ENCODE measurements at regions of chr1 and their contacts with region 1.

Region 1: GRCh38 chr1:110106013-110106941 is 6.0 kb upstream of the UBL4B start:
- DNase-seq: peak; percentile 23
- ATAC-seq: peak; percentile 97
- H3K4me3 ChIP-seq: no peak overlapping the region
- H3K27ac ChIP-seq: no peak overlapping the region
- H3K4me1 ChIP-seq: peaks cover 15% of the 10 kb centered on the region
- H3K27me3 ChIP-seq: no peaks in the 10 kb centered on the region
- CTCF ChIP-seq: peak; percentile 93 to 95 (median 93); a peak in 5 of 6 replicates
- EP300 ChIP-seq: no peak
- POLR2A ChIP-seq: no peak
- RAD21 ChIP-seq: peak; percentile 85

Region 2: GRCh38 chr1:110053557-110054428 is 52.5 kb before region 1 on chr1:
- CTCF ChIA-PET with region 1: interaction called, 36 read pairs
- POLR2A ChIA-PET with region 1: no interaction called
- RAD21 ChIA-PET with region 1: interaction called, 9 read pairs
- SMC1A ChIA-PET with region 1: interaction called, 7 read pairs
- in situ Hi-C with region 1: loop called (anchors 5 kb)
- intact Hi-C with region 1: loop called (anchors 1 kb)
- DNase-seq: no peak
- ATAC-seq: peak; percentile 95
- H3K4me3 ChIP-seq: no peak overlapping the region
- H3K27ac ChIP-seq: no peak overlapping the region
- H3K4me1 ChIP-seq: no peaks in the 10 kb centered on the region
- H3K27me3 ChIP-seq: no peaks in the 10 kb centered on the region
- CTCF ChIP-seq: peak; percentile 95 to 97 (median 96); a peak in 5 of 6 replicates
- EP300 ChIP-seq: no peak
- POLR2A ChIP-seq: peak; percentile 37; the same call in 1 of the 2 replicates
- RAD21 ChIP-seq: peak; percentile 77

Region 3: DNA sequence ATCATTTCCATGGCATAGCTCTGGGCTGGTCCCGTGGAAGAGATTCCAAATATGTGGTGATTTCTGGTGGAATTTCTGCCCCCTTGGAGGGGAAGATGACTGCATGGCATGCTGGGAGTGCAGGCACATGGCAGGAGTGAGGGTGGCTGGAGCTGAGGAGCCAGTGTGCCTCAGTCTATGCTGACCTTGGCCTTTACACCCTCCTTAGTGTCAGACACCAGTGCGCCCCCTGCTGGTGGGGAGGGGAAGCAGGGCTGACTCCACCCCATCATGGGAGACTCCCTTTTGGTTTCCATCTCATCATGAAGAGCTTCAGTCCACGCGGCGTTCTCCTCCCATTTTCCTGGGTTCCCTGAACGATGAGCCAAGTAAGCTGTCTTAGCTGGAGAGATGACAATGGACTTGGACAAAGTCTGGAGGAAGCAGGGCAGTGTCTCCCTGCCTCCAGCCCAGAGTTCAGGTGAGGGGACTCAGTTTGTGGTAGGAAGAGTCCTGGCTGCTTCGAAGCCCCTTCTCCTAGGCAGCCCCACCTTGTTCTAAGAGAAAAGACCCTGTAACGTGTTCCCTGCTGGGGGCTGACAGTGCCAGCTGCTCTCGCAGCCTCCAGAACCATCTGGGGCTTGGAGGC is 46.1 kb before region 1 on chr1:
- CTCF ChIA-PET with region 1: interaction called, 36 read pairs
- POLR2A ChIA-PET with region 1: no interaction called
- RAD21 ChIA-PET with region 1: interaction called, 3 read pairs
- SMC1A ChIA-PET with region 1: interaction called, 5 read pairs
- in situ Hi-C with region 1: no loop called
- intact Hi-C with region 1: no loop called
- DNase-seq: no peak
- ATAC-seq: peak; percentile 98
- H3K4me3 ChIP-seq: no peak overlapping the region
- H3K27ac ChIP-seq: no peak overlapping the region
- H3K4me1 ChIP-seq: no peaks in the 10 kb centered on the region
- H3K27me3 ChIP-seq: no peaks in the 10 kb centered on the region
- CTCF ChIP-seq: peak; percentile 86 to 99 (median 94)
- EP300 ChIP-seq: no peak
- POLR2A ChIP-seq: peak; percentile 32; the same call in 1 of the 2 replicates
- RAD21 ChIP-seq: peak; percentile 14; the same call in 1 of the 2 replicates

Region 4: DNA sequence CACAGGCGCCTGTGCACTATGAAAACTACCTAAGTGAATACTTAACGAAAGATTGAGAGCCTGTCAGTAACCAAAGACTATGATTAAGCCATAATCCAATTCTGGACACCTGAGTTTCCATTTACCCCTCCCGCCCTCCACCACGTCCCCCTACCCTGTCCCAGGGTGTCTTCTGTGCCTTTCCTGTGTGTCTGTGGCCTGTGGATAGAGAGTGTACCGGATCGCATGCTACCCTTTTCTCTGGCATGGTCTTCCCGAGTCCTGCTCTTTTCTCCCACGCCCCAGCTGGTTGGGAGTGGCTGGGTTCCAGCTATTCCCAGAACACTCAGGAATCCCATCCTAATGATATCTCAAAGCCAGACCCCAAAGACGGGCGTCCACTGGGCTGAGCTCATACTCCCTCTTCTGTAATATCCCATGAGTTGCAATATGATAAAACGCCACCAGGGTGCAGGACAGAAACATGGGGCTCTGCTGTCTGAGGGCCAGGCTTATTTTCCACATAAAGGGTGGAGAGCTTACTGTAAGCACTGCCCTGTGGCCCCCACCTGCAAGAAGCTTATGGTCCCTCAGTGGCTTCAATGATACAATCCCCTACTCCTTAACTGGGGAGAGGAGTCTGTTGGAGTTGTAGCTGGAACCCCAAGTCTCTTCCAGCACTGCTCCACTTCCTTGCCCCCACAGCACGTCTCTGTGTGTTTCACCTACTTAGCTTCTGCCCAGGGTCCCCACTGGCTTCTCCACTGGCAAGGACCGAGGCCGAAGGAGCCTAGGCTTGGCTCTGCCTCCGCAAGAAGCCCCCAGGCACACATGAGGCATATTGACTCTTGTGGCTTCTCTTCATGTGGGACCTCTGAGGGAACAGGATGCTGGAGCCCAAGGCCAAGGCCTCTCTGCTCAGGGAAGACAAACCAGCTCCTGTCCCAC is 18.2 kb before region 1 on chr1:
- CTCF ChIA-PET with region 1: interaction called, 120 read pairs
- POLR2A ChIA-PET with region 1: no interaction called
- RAD21 ChIA-PET with region 1: interaction called, 14 read pairs
- SMC1A ChIA-PET with region 1: interaction called, 9 read pairs
- in situ Hi-C with region 1: no loop called
- intact Hi-C with region 1: loop called (anchors 1 kb)
- DNase-seq: no peak
- ATAC-seq: peak; percentile 89
- H3K4me3 ChIP-seq: no peak overlapping the region
- H3K27ac ChIP-seq: no peak overlapping the region
- H3K4me1 ChIP-seq: peaks cover 5% of the 10 kb centered on the region; the same call in 1 of the 2 replicates
- H3K27me3 ChIP-seq: peaks cover 5 to 8% of the 10 kb centered on the region in 2 experiments; a peak in 2 of 4 replicates
- CTCF ChIP-seq: peak; percentile 61 to 74 (median 67)
- EP300 ChIP-seq: no peak
- POLR2A ChIP-seq: no peak
- RAD21 ChIP-seq: peak; percentile 71

Region 5: GRCh38 chr1:110118636-110119615 is 12.6 kb after region 1 on chr1:
- CTCF ChIA-PET with region 1: interaction called, 18 read pairs
- POLR2A ChIA-PET with region 1: no interaction called
- RAD21 ChIA-PET with region 1: interaction called, 5 read pairs
- SMC1A ChIA-PET with region 1: no interaction called
- in situ Hi-C with region 1: no loop called
- intact Hi-C with region 1: no loop called
- DNase-seq: no peak
- ATAC-seq: no peak
- H3K4me3 ChIP-seq: no peak overlapping the region
- H3K27ac ChIP-seq: no peak overlapping the region
- H3K4me1 ChIP-seq: no peaks in the 10 kb centered on the region
- H3K27me3 ChIP-seq: peaks cover 1 to 2% of the 10 kb centered on the region in 2 experiments; a peak in 2 of 4 replicates
- CTCF ChIP-seq: no peak
- EP300 ChIP-seq: no peak
- POLR2A ChIP-seq: no peak
- RAD21 ChIP-seq: no peak

Region 6: GRCh38 chr1:110155878-110156522 is 49.7 kb after region 1 on chr1:
- CTCF ChIA-PET with region 1: no interaction called
- POLR2A ChIA-PET with region 1: no interaction called
- RAD21 ChIA-PET with region 1: no interaction called
- SMC1A ChIA-PET with region 1: no interaction called
- in situ Hi-C with region 1: no loop called
- intact Hi-C with region 1: no loop called
- DNase-seq: no peak
- ATAC-seq: peak; percentile 66
- H3K4me3 ChIP-seq: no peak overlapping the region
- H3K27ac ChIP-seq: no peak overlapping the region
- H3K4me1 ChIP-seq: no peaks in the 10 kb centered on the region
- H3K27me3 ChIP-seq: peaks cover 3 to 4% of the 10 kb centered on the region in 2 experiments; a peak in 3 of 4 replicates
- CTCF ChIP-seq: no peak
- EP300 ChIP-seq: no peak
- POLR2A ChIP-seq: no peak
- RAD21 ChIP-seq: no peak

Measured in GM12878 (cell line).